Activated CD4-positive, alpha-beta T cell treated with anti-CD3 and anti-CD28 coated beads, Interleukin-2, amount 10 ng/mL, durations not matched to agents 24 days and 14 days (primary cell): ENCODE measurements at regions of chr11 and their contacts with region 1.

Region 1: DNA sequence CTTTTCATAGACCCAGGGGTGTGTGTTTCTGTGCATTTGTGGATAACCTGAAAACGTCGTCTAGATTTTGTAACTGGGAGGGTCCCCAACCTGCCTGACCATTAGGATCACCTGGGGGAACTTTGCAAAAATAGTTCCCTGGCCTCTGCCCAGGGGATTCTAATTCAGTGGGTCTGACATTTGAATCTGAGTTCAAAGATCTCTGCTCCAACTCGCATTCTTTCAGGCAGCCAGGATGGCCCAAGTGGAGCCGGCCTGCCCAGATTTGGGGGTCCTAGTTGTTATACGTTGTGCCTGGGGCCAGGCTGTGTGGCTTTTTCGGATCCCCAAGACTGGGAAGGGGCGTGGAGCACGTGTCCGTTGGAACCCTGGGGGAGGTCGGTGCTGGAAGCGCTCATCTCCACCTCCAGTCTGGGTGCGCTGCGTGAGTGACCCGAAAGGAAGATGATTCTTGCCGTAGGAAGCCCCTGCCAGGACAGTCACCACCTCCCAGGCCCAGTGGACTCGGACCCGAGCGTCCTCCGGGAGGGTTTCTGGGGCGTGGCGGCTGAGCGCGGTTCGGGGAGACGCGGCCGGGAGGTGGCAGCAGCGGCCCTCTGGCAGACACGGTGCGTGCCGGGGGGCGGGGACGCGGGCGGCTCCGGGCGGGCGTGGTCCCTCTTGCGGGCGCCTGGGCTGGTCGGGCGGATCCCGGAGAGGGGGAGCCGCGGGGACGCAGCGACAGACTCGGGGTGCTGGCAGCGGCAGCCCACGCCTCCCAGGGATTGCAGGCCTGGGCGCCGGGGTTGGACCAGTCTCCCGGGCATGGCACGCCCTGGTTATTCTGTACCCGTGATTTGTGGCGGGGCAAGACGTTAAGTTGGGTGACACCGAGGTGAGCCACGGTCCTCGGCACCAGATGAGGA is 29.2 kb upstream of the PLET1 start:
- DNase-seq: peak; percentile 97
- H3K4me3 Mint-ChIP-seq: peak overlapping the region; percentile 81
- H3K27ac Mint-ChIP-seq: peak overlapping the region; percentile 41
- H3K4me1 Mint-ChIP-seq: peaks cover 19% of the 10 kb centered on the region
- H3K27me3 Mint-ChIP-seq: peaks cover 13% of the 10 kb centered on the region

Region 2: DNA sequence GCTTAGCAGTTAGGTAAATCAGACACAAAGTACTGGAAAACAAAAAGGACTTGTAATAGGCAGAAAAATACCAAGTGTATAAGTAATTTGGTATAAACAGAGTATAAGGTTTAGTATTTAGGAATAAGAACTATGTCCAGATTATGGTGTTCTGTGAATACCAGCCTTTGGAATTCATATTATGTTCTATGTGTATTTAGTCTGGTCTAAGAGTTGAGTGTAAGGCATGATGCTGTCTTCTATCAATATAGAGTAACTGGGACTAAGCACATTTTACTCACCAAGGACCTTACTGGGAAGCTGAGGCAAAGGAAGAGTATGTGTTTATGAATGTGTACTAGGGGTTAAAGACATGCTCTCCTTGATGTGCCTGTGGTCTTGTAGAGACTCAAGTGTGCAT is 193.6 kb before region 1 on chr11:
- intact Hi-C with region 1: no loop called
- DNase-seq: no peak
- H3K4me3 Mint-ChIP-seq: no peak overlapping the region
- H3K27ac Mint-ChIP-seq: no peak overlapping the region
- H3K4me1 Mint-ChIP-seq: peaks cover 2% of the 10 kb centered on the region
- H3K27me3 Mint-ChIP-seq: no peaks in the 10 kb centered on the region

Region 3: DNA sequence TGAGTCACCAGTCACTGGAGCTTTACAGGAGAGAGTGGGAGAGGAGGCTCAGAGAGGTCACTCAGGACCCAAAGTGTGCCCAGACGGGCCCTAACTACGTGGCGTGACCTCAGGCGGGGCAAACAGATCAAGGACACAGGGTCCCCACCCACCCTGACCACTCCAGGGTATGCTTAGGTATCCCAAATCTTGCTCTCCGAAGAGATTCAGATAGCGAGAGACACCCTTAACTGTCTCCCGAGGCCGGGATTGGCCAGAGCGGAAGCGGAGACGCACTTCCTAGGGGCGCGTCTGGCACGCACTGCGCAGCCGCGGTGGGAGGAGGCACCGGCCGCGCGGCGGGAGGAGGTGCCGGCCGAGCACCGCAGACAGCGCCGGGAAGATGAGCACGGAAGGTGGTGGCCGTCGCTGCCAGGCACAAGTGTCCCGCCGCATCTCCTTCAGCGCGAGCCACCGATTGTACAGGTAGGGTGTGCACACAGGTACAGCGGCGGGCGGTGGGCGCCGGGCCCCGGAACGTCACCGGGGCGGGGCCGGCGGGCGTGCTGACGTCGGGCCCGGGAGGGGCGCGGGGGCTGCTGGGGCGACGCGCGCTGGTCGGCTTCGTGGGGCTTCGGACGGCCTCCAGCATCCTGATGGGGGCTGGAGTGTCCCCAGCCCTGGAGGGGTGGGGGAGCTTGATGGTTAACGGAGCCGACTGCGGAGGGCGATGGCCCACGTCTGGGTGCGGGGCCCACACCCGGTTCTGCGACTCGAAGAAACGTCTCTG is 63.6 kb before region 1 on chr11 and contains the start of gene PTS:
- intact Hi-C with region 1: loop called (anchors 2 kb)
- DNase-seq: peak; percentile 96
- H3K4me3 Mint-ChIP-seq: peak within 1 kb of the TSS; percentile 94
- H3K27ac Mint-ChIP-seq: peak within 1 kb of the TSS; percentile 94
- H3K4me1 Mint-ChIP-seq: peaks cover 17% of the 10 kb centered on the region
- H3K27me3 Mint-ChIP-seq: peaks cover 3% of the 10 kb centered on the region
- total RNA-seq, gene PTS: 33.1 and 34.4 TPM in 2 replicates

Region 4: DNA sequence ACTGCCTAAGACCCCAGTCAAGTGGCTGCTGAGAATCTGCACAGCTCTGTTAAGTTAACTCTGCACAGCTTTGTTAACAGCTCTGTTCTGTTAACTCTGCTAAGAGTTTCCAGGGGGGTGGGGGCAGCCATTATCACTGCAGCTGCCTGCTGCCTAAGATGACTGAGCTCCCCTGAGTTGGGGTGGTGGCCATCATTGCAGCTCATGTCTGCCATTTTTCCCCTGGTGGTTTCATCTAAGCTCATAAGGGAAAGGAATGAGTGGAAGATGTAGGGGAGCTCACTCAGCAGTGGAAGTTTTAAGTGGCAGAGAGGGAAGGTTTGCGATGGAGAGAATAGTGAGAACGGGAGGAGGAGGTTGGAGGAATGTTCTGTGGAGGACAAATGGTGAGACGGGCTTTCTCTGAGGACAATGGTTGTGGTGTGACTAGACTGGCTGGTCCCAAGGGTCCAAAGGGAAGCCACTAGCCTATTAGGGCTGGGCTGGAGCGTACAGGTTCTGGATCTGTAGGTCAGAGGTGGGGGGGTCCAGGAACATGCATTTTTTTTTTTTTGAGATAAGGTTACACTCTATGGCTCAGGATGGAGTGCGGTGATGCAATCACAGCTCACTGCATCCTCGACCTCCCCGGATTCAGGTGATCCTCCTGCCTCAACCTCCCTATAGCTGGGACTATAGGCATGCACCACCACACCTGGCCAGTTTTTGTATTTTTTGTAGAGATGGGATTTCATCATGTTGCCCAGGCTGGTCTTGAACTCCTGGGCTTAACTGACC is 15.6 kb before region 1 on chr11:
- intact Hi-C with region 1: no loop called
- DNase-seq: no peak
- H3K4me3 Mint-ChIP-seq: no peak overlapping the region
- H3K27ac Mint-ChIP-seq: no peak overlapping the region
- H3K4me1 Mint-ChIP-seq: peaks cover 12% of the 10 kb centered on the region
- H3K27me3 Mint-ChIP-seq: peaks cover 4% of the 10 kb centered on the region

Region 5: GRCh38 chr11:112355726-112356125 is 65.9 kb after region 1 on chr11:
- intact Hi-C with region 1: no loop called
- DNase-seq: no peak
- H3K4me3 Mint-ChIP-seq: no peak overlapping the region
- H3K27ac Mint-ChIP-seq: no peak overlapping the region
- H3K4me1 Mint-ChIP-seq: peaks cover 2% of the 10 kb centered on the region
- H3K27me3 Mint-ChIP-seq: no peaks in the 10 kb centered on the region

Region 6: GRCh38 chr11:112453601-112454577 is 164.0 kb after region 1 on chr11:
- intact Hi-C with region 1: loop called (anchors 10 kb)
- DNase-seq: peak; percentile 74
- H3K4me3 Mint-ChIP-seq: no peak overlapping the region
- H3K27ac Mint-ChIP-seq: no peak overlapping the region
- H3K4me1 Mint-ChIP-seq: peaks cover 5% of the 10 kb centered on the region
- H3K27me3 Mint-ChIP-seq: no peaks in the 10 kb centered on the region

Region 7: GRCh38 chr11:112555491-112556364 is 265.9 kb after region 1 on chr11:
- intact Hi-C with region 1: loop called (anchors 1 kb)
- DNase-seq: peak; percentile 89
- H3K4me3 Mint-ChIP-seq: no peak overlapping the region
- H3K27ac Mint-ChIP-seq: no peak overlapping the region
- H3K4me1 Mint-ChIP-seq: peaks cover 2% of the 10 kb centered on the region
- H3K27me3 Mint-ChIP-seq: peaks cover 8% of the 10 kb centered on the region

Region 8: GRCh38 chr11:113289431-113290187 is 999.8 kb after region 1 on chr11:
- intact Hi-C with region 1: loop called (anchors 1 kb)
- DNase-seq: peak; percentile 90
- H3K4me3 Mint-ChIP-seq: no peak overlapping the region
- H3K27ac Mint-ChIP-seq: no peak overlapping the region
- H3K4me1 Mint-ChIP-seq: no peaks in the 10 kb centered on the region
- H3K27me3 Mint-ChIP-seq: peaks cover 5% of the 10 kb centered on the region